HEK293T (cell line): ENCODE measurements at regions of chr14 and their contacts with region 1.

Region 1: GRCh38 chr14:49852301-49853157 is at the start of gene NEMF:
- DNase-seq: peak; percentile 74

Region 2: DNA sequence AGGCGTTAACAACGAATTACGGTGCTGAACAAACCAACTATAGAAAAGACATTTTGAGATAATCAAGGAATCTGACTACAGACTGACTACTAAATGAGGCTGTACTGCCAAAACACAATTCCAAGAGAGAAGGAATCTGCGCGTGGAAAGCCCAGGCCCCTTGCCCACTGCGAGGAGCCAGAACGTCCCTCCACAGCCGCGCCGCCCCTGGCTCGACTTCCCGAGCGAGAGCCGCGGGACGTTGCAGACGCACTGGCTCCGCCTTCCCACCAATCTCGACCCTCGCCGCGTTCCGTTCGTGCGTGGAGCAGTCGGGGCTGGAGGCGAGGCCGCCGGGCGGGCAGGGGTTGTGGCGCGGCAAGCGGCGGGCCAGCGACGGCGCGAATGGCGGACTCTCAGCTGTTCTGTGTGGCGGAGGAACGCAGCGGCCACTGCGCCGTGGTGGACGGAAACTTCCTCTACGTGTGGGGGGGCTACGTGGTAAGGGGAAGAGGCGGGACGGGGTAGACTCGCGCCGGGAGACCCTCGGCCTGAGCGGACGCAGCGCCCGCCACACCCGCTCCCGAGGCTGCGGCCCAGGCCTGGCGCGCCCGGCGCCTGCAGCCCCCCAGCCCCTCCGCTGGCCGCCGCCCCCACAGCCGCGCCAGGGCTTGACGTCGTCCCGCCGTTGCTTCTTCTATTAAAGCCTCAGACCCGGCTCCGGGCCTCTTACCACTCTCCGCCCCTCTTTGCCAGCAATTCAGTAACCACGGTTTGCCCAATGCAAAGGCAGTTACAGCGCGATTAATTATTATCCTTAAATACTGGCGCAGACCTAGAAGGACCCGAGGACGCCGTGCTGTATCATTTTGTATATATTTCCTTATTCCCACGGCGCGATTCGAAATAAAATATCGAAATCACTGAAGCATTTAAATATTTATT is 159.5 kb before region 1 on chr14 and contains the start of gene KLHDC1:
- CTCF ChIA-PET with region 1: no interaction called
- POLR2A ChIA-PET with region 1: interaction called, 10 read pairs
- DNase-seq: peak; percentile 64

Region 3: GRCh38 chr14:49767562-49768300 is 84.8 kb before region 1 on chr14 and contains the start of gene KLHDC2:
- CTCF ChIA-PET with region 1: no interaction called
- POLR2A ChIA-PET with region 1: interaction called, 11 read pairs
- DNase-seq: peak; percentile 79

Region 4: DNA sequence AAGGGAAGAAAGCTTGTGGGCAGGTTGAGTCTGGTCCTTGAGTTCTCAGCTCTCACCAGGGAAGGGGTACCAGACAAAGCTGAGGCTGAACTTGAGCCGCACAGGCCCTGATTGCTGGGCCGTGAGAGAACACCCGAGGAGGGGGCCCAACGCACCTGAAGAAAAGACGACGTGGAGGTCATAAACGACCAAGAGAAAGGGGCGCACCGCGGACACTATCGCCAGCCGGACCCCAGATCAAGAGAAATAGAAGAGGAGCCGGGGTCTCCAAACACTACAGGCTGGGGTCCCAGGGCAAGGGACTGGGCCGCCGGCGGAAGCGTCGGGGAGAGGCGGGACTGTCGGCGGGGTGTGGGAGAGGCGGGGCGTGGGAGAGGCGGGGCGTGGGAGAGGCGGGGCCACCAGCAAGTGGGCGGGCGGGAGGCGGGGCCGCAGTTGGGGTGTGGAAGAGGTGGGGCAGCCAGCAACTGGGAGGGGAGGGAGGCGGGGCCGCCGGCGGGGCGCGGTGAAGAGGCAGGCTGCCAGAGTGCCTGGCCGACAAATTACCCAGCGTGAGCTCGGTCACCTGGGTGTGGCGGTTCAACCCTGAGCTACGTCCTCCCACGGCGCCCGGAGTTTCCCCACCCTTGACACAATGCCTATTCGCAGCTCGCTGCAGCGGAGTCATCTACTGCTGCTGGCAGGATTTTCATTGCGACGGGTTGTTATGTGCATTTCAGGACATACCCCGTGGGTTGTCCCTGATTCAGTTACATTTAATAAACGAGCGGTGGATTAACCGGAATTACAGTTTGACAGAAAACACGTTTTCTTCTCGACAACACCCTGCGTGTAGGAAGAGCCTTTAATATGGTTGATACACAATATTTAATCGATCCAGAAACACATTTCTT is 15.5 kb after region 1 on chr14:
- CTCF ChIA-PET with region 1: interaction called, 79 read pairs
- POLR2A ChIA-PET with region 1: interaction called, 57 read pairs
- DNase-seq: peak; percentile 94